IMR-90 (cell line): ENCODE measurements at regions of chr3 and their contacts with region 1.

Region 1: DNA sequence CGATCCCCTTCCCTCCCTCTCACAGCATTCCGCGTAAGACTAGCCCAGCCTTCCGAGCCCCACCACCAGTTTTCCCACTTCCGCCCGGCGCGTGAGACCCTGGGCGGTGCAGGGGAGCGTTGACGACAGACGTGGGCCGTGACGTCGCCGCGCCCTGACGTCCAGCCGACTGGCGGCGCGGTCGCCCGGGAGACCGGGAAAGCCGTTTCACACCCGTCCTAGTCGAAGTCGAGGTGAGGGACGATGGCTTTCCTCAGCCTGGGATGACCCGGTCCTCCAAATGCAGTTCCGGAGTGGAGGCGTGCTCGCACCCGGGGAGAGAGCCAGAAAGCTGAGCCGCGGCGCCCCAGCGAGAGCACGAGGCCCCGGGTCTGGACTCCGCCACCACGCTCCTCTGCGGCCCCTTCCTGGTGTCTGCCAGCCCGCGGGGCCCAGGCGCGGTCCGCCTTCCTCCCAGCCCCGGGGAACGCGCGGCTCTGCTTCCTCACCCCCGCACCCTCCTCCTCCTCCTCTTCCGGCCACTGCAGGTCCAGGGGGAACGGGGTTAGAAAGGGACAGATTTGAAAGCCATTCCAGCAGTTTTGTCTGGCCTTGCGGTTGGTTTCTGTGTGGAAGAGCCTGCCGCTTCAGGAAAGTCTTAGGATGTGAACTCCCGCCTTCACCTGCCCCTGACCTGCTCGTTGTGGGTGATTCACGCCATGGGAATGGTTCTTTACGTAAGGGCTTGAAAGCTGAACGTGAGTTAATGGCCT is at the start of gene LEKR1:
- DNase-seq: peak; percentile 98
- ATAC-seq: peak; percentile 90
- H3K4me3 ChIP-seq: peak within 1 kb of the TSS; percentile 53
- H3K27ac ChIP-seq: peak within 1 kb of the TSS; percentile 92
- H3K4me1 ChIP-seq: no peaks in the 10 kb centered on the region
- H3K27me3 ChIP-seq: no peaks in the 10 kb centered on the region
- CTCF ChIP-seq: no peak
- POLR2A ChIP-seq: peak; percentile 63; the same call in 1 of the 2 replicates
- RAD21 ChIP-seq: no peak; the same call in none of the 2 replicates
- total RNA-seq, gene LEKR1: 0.36 and 0.56 TPM in 2 replicates

Region 2: DNA sequence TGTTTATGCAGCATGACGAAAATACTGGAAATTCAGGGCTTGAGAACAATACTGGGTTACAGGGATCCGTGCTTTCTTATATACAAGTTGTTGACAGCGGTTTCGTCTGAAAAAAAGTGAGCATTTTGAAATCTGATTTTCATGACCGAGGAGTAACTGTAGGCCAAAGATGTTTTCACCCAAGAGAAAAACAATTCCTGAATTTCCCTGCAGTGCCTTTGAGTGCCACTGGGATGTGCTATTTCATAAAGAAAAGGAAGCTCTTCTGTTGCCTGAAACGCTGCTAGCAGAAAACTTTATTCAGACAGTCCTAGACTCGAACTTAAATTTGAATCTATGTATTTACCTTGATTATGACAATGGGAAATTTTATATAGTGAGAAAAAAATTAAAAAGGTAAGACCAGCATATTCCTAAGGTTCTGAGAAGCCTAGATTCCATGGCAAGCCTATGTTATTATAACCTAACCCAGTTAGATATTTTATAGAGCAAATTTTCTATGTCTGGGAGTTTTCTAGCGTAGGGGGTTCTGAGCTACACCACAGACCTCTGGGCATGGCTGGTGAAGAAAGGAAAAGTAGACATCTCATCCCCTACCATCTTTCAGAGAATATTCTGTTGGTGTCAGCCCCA is 675.8 kb before region 1 on chr3:
- CTCF ChIA-PET with region 1: no interaction called
- POLR2A ChIA-PET with region 1: no interaction called
- dilution Hi-C with region 1: no loop called
- in situ Hi-C with region 1: no loop called
- intact Hi-C with region 1: no loop called
- DNase-seq: peak; percentile 64
- ATAC-seq: peak; percentile 86
- H3K4me3 ChIP-seq: no peak overlapping the region
- H3K27ac ChIP-seq: no peak overlapping the region
- H3K4me1 ChIP-seq: peaks cover 3% of the 10 kb centered on the region
- H3K27me3 ChIP-seq: peaks cover 5% of the 10 kb centered on the region
- CTCF ChIP-seq: peak; percentile 94
- POLR2A ChIP-seq: no peak
- RAD21 ChIP-seq: peak; percentile 92

Region 3: DNA sequence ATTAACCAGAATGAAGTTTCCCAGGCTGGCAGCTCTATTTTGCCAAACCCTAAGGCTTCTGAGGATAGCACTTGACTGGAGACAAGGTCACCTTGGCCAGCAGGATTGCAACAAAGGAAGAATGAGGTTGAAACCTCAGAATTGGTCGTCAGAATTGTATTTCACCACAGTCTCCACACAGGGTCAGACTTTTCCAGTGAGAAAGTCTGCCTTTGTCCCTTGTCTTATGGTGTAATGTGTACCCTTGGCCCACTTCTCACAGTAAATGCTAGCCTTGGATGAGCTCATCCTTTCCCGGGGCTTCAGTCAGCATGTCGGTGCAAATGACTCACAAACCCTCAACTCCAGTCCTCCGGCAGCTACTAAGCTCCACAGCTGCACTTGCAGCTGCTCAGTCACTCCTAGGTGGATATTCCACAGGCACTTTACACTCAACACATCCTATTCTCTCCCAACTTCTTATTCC is 291.1 kb before region 1 on chr3:
- CTCF ChIA-PET with region 1: no interaction called
- POLR2A ChIA-PET with region 1: no interaction called
- dilution Hi-C with region 1: no loop called
- in situ Hi-C with region 1: loop called (anchors 25 kb)
- intact Hi-C with region 1: no loop called
- DNase-seq: peak; percentile 100
- ATAC-seq: peak; percentile 88
- H3K4me3 ChIP-seq: no peak overlapping the region
- H3K27ac ChIP-seq: peak overlapping the region; percentile 28; the same call in 1 of the 2 replicates
- H3K4me1 ChIP-seq: peaks cover 18% of the 10 kb centered on the region
- H3K27me3 ChIP-seq: no peaks in the 10 kb centered on the region
- CTCF ChIP-seq: peak; percentile 53
- POLR2A ChIP-seq: peak; percentile 74
- RAD21 ChIP-seq: peak; percentile 61

Region 4: GRCh38 chr3:156795890-156796481 is 30.3 kb before region 1 on chr3:
- CTCF ChIA-PET with region 1: no interaction called
- POLR2A ChIA-PET with region 1: no interaction called
- dilution Hi-C with region 1: no loop called
- in situ Hi-C with region 1: no loop called
- intact Hi-C with region 1: no loop called
- DNase-seq: peak; percentile 84
- ATAC-seq: peak; percentile 35
- H3K4me3 ChIP-seq: no peak overlapping the region
- H3K27ac ChIP-seq: no peak overlapping the region
- H3K4me1 ChIP-seq: peaks cover 6% of the 10 kb centered on the region
- H3K27me3 ChIP-seq: no peaks in the 10 kb centered on the region
- CTCF ChIP-seq: no peak
- POLR2A ChIP-seq: no peak
- RAD21 ChIP-seq: no peak

Region 5: GRCh38 chr3:156843440-156843808 is 17.1 kb after region 1 on chr3:
- CTCF ChIA-PET with region 1: no interaction called
- POLR2A ChIA-PET with region 1: no interaction called
- dilution Hi-C with region 1: no loop called
- in situ Hi-C with region 1: no loop called
- intact Hi-C with region 1: no loop called
- DNase-seq: peak; percentile 12
- ATAC-seq: no peak
- H3K4me3 ChIP-seq: no peak overlapping the region
- H3K27ac ChIP-seq: no peak overlapping the region
- H3K4me1 ChIP-seq: 0 out of 2 replicates have a peak, but pooled peaks cover 1% of the 10 kb centered on the region
- H3K27me3 ChIP-seq: no peaks in the 10 kb centered on the region
- CTCF ChIP-seq: no peak
- POLR2A ChIP-seq: no peak
- RAD21 ChIP-seq: no peak

Region 6: DNA sequence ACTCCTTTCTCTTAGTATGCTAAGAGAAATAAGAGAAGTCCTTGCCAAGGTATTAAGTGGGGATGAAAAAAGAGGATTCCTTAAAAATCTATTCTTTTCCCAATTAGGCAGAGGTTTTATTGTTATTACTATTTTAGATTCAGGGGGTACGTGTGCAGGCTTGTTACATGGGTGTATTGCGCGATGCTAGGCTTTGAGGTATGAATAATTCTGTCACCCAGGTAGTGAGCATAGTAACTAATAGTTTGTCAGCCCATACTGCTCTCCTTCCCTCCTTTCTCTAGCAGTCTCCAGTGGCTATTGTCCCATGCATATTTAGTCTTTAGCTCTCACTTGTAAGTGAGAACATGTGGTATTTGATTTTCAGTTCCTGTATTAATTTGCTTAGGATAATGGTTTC is 83.7 kb after region 1 on chr3:
- CTCF ChIA-PET with region 1: no interaction called
- POLR2A ChIA-PET with region 1: no interaction called
- dilution Hi-C with region 1: no loop called
- in situ Hi-C with region 1: no loop called
- intact Hi-C with region 1: no loop called
- DNase-seq: no peak
- ATAC-seq: no peak
- H3K4me3 ChIP-seq: no peak overlapping the region
- H3K27ac ChIP-seq: no peak overlapping the region
- H3K4me1 ChIP-seq: no peaks in the 10 kb centered on the region
- H3K27me3 ChIP-seq: no peaks in the 10 kb centered on the region
- CTCF ChIP-seq: no peak
- POLR2A ChIP-seq: no peak
- RAD21 ChIP-seq: no peak

Region 7: DNA sequence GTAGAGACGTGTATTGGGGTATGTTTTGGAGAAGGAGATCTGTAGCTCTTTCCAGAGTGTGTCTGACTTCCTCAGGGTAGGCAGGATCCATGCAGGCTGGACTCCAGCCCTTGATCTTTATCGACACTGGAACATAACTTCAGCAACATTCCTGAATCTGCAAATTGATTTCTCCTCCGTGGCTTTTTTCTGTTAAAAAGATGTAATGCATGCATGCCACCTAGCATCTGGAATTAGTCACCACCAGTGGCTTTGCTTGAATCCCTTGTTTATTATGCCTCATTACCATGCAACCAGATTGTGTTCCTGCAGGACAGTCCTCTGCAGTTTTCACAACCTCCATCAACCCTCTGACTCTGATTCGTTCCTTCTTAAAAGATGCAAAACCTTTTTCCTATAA is 247.5 kb after region 1 on chr3:
- CTCF ChIA-PET with region 1: no interaction called
- POLR2A ChIA-PET with region 1: no interaction called
- dilution Hi-C with region 1: no loop called
- in situ Hi-C with region 1: no loop called
- intact Hi-C with region 1: loop called (anchors 1 kb)
- DNase-seq: peak; percentile 74
- ATAC-seq: peak; percentile 61
- H3K4me3 ChIP-seq: no peak overlapping the region
- H3K27ac ChIP-seq: no peak overlapping the region
- H3K4me1 ChIP-seq: peaks cover 8% of the 10 kb centered on the region
- H3K27me3 ChIP-seq: no peaks in the 10 kb centered on the region
- CTCF ChIP-seq: no peak
- POLR2A ChIP-seq: no peak
- RAD21 ChIP-seq: peak; percentile 23; the same call in 1 of the 2 replicates